ENCODE measurements at regions of chr2 and their contacts with region 1.

Region 1: DNA sequence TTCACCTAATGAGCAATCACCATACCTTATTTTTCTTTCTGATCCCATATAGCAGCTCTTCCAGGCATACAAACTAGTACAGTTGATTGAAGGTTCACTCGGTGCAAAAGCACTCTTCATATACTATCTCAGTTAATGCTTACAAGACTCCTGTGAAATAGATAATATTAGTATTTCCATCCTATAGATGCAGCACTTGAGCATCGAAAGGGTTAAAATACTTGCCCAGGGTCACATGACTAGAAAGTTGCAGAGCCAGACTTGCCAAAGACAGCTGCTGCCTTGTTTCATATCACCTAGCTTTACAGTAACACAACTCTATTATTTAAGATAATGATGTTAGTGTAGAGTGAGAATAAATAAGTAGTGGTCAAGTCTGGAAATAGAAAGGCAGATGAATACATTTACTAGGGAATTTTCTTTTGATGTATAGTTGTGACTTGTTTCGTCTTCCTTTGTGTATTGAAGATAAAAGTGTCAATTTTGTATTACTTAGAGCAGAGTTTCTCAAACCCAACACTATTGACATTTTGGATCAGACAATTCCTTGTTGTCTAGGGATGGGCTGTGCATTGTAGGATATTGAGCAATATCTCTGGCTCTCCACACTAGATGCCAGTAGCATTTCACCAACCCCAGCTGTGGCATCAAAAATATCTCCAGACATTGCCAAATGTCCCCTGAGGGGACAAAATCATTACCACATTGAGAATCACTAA is 466.1 kb upstream of the TNP1 start:
- DNase-seq: no peak
- H3K4me3 ChIP-seq: no peak overlapping the region
- H3K27ac ChIP-seq: no peak overlapping the region
- H3K4me1 ChIP-seq: no peaks in the 10 kb centered on the region
- H3K27me3 ChIP-seq: no peaks in the 10 kb centered on the region
- CTCF ChIP-seq: no peak
- EP300 ChIP-seq: no peak
- POLR2A ChIP-seq: no peak

Region 2: GRCh38 chr2:217261452-217261851 is 64.5 kb before region 1 on chr2:
- intact Hi-C with region 1: loop called in 1 of 4 experiments (anchors 10 kb)
- DNase-seq: no peak
- H3K4me3 ChIP-seq: no peak overlapping the region
- H3K27ac ChIP-seq: no peak overlapping the region
- H3K4me1 ChIP-seq: peaks cover 7% of the 10 kb centered on the region
- H3K27me3 ChIP-seq: no peaks in the 10 kb centered on the region
- CTCF ChIP-seq: no peak
- EP300 ChIP-seq: no peak
- POLR2A ChIP-seq: no peak